Activated CD4-positive, alpha-beta T cell treated with anti-CD3 and anti-CD28 coated beads, Interleukin-2, amount 10 ng/mL, durations not matched to agents 24 days and 14 days (primary cell): ENCODE measurements at regions of chr6 and their contacts with region 1.

Region 1: GRCh38 chr6:29016559-29017427 is 11.7 kb upstream of the ZNF311 start:
- DNase-seq: peak; percentile 95
- H3K4me3 Mint-ChIP-seq: peak overlapping the region; percentile 89
- H3K27ac Mint-ChIP-seq: peak overlapping the region; percentile 82
- H3K4me1 Mint-ChIP-seq: peaks cover 12% of the 10 kb centered on the region
- H3K27me3 Mint-ChIP-seq: peaks cover 26% of the 10 kb centered on the region

Region 2: GRCh38 chr6:28838634-28839442 is 178.0 kb before region 1 on chr6:
- intact Hi-C with region 1: loop called (anchors 1 kb)
- DNase-seq: peak; percentile 94
- H3K4me3 Mint-ChIP-seq: peak overlapping the region; percentile 98
- H3K27ac Mint-ChIP-seq: peak overlapping the region; percentile 81
- H3K4me1 Mint-ChIP-seq: peaks cover 16% of the 10 kb centered on the region
- H3K27me3 Mint-ChIP-seq: peaks cover 44% of the 10 kb centered on the region

Region 3: DNA sequence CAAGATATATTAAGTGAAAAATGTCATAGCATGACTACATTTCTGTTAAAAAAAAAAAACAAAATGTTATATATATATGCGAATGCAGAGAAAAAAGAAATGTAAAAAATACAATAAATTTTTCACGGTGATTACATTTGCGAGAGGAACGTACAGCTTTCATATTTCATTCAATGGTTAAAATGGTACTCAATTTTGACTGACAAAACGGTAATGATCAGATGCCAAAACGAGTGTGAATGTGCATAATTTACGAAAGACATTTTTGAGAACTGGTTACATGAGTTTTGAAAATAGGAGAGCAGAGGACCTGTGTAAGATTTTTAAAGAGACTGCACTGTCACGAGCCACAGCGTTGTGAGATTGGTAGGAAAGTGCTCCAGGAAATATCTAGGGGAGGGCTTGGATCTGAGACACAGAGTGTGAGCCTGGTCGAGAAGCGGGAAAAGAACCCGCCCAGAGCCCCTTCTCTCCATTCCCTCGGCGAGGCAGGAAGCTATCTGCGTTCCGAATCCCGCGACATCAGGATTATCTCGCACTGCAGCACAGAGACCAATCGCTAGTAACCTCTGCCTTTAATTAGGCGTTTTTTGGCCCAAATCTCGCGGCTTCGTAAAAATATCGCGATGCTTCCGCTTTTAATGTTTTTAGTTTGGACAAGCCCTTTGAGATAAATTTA is 121.5 kb before region 1 on chr6:
- intact Hi-C with region 1: loop called (anchors 1 kb)
- DNase-seq: peak; percentile 97
- H3K4me3 Mint-ChIP-seq: peak overlapping the region; percentile 99
- H3K27ac Mint-ChIP-seq: peak overlapping the region; percentile 100
- H3K4me1 Mint-ChIP-seq: peaks cover 14% of the 10 kb centered on the region
- H3K27me3 Mint-ChIP-seq: peaks cover 7% of the 10 kb centered on the region

Region 4: DNA sequence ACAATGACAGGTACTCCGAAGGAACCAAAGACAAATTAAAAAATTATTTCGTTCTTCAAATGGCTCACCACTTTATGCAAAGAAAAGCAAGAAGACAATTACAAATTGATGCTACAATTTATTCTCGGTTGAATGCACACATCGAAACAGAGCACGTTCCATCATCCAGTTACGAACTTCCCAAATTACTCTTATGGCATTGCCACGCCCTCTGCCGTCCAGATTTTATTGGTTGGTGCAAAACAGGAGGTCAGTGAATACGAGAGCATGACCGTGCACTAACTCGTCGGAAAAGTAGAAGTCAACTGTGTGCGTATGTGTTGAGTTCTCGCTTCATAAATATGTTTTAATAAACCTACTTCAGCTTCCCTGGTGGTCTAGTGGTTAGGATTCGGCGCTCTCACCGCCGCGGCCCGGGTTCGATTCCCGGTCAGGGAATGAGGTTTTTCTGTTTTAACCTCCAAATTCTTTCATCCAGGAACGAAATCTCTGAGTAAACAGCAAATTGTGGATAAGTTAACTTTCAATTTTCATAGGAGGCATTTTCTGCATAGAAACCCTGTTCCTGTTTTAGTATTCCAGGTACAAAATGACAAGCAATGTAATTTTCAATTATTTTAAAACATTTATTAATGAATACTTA is 34.8 kb before region 1 on chr6:
- intact Hi-C with region 1: loop called (anchors 1 kb)
- DNase-seq: peak; percentile 91
- H3K4me3 Mint-ChIP-seq: peak overlapping the region; percentile 92
- H3K27ac Mint-ChIP-seq: peak overlapping the region; percentile 95
- H3K4me1 Mint-ChIP-seq: peaks cover 56% of the 10 kb centered on the region
- H3K27me3 Mint-ChIP-seq: peaks cover 38% of the 10 kb centered on the region